ENCODE measurements at regions of chr2 and their contacts with region 1.

Region 1: GRCh38 chr2:18067588-18068384 is 189.3 kb downstream of the KCNS3 start:
- DNase-seq: no peak
- H3K4me3 ChIP-seq: peak overlapping the region in 1 of 59 donors; percentile 10
- H3K27ac ChIP-seq: no peak overlapping the region
- H3K27me3 ChIP-seq: peaks cover 0 to 66% (median 3%) of the 10 kb centered on the region in 45 donors
- CTCF ChIP-seq: no peak

Region 2: GRCh38 chr2:18104595-18105224 is 36.9 kb after region 1 on chr2:
- intact Hi-C with region 1: no loop called
- DNase-seq: no peak
- H3K4me3 ChIP-seq: no peak overlapping the region
- H3K27ac ChIP-seq: no peak overlapping the region
- H3K27me3 ChIP-seq: peaks cover 0 to 25% (median 0%) of the 10 kb centered on the region in 45 donors
- CTCF ChIP-seq: no peak

Region 3: DNA sequence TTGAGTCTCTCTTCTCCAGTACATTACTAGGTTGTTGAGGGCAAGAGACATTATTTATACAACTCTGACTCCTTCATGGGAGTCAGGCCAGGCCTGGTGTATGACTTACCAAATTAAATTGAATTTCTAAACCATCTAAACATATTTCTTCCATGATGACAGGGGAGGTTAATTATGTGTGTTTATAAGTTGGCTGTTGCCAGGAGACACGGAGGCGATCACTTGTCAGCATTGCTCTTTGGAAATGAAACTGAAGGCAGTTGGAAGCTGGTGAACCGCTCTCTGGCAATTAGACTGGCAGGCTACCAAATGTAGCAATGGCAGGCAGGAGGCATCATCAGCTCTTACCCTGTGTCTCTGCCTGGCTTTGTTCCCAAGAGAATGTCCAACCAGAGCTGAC is 52.1 kb after region 1 on chr2:
- intact Hi-C with region 1: loop called in 1 of 2 experiments (anchors 2 kb)
- DNase-seq: peak in 1 of 10 donors; percentile 43
- H3K4me3 ChIP-seq: no peak overlapping the region
- H3K27ac ChIP-seq: no peak overlapping the region
- H3K27me3 ChIP-seq: peaks cover 0 to 26% (median 0%) of the 10 kb centered on the region in 45 donors
- CTCF ChIP-seq: no peak

Region 4: GRCh38 chr2:18253686-18254197 is 186.0 kb after region 1 on chr2:
- intact Hi-C with region 1: no loop called
- DNase-seq: no peak
- H3K4me3 ChIP-seq: no peak overlapping the region
- H3K27ac ChIP-seq: no peak overlapping the region
- H3K27me3 ChIP-seq: no peaks in the 10 kb centered on the region
- CTCF ChIP-seq: no peak